Ascending aorta (tissue), 2 donors: ENCODE measurements at regions of chr16 and their contacts with region 1.

Region 1: GRCh38 chr16:30065143-30065850 is at the start of gene ALDOA:
- DNase-seq: peak; percentile 93 to 99
- H3K4me3 ChIP-seq: peak within 1 kb of the TSS; percentile 92
- H3K27ac ChIP-seq: peak within 1 kb of the TSS; percentile 97 to 99
- H3K4me1 ChIP-seq: peaks cover 22 to 51% of the 10 kb centered on the region in 2 donors
- H3K27me3 ChIP-seq: no peaks in the 10 kb centered on the region
- CTCF ChIP-seq: no peak
- total RNA-seq, gene ALDOA: 1,202 TPM

Region 2: GRCh38 chr16:30052671-30053372 is 12.5 kb before region 1 on chr16:
- intact Hi-C with region 1: loop called (anchors 1 kb)
- DNase-seq: peak in 1 of 2 donors; percentile 94
- H3K4me3 ChIP-seq: peak overlapping the region; percentile 79 to 88
- H3K27ac ChIP-seq: peak overlapping the region; percentile 41 to 59
- H3K4me1 ChIP-seq: peaks cover 0 to 12% of the 10 kb centered on the region in 2 donors
- H3K27me3 ChIP-seq: no peaks in the 10 kb centered on the region
- CTCF ChIP-seq: no peak

Region 3: GRCh38 chr16:30091474-30092372 is 26.4 kb after region 1 on chr16 and contains the start of gene TBX6:
- intact Hi-C with region 1: loop called (anchors 1 kb)
- DNase-seq: peak; percentile 65 to 95
- H3K4me3 ChIP-seq: peak within 1 kb of the TSS; percentile 53 to 72
- H3K27ac ChIP-seq: peak within 1 kb of the TSS; percentile 74 to 84
- H3K4me1 ChIP-seq: peaks cover 22 to 27% of the 10 kb centered on the region in 2 donors
- H3K27me3 ChIP-seq: no peaks in the 10 kb centered on the region
- CTCF ChIP-seq: peak; percentile 75 to 96 (median 81)
- total RNA-seq, gene TBX6: 0.75 TPM

Region 4: DNA sequence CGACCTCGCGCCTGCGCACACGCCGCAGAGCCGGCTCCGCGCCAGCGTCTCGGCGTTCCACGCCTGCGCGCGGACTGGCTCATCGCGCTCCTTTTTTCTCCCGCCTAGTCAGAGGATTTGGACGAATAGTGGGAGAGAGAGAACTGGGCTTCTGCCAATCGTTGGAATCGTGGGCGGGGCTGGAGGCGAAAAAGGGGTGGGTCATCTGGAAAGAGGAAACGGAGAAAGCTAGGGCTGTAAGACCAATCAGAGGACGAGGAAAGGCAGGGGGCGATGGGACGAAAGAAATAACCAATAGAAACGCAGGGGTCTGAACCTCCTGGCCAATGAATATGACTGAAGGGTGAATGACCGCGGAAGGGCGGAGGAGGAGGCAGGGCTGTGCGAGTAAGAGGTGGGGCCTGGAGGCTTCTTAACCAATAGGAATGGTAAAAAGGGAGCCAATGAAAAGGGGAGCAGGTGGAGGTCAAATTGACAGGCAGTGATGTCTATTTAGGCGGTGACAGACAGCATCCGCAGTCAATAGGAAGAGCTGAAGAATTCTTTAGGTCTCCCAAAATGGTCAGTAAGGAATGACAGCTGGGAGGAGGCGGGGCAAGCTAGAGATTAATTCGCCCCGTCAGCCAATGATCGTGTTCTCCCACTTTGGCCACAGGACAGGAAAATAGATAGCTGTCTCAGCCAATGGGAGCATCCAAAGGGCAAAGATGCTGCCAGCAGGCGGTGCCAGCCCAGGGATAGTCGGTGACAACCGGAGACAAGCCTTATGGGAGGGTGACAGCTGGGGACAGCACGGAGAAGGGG is 305.3 kb after region 1 on chr16 and contains the start of gene TBC1D10B:
- intact Hi-C with region 1: loop called (anchors 2 kb)
- DNase-seq: peak; percentile 99 to 100
- H3K4me3 ChIP-seq: peak within 1 kb of the TSS; percentile 78 to 82
- H3K27ac ChIP-seq: peak within 1 kb of the TSS; percentile 85 to 88
- H3K4me1 ChIP-seq: peaks cover 13 to 26% of the 10 kb centered on the region in 2 donors
- H3K27me3 ChIP-seq: no peaks in the 10 kb centered on the region
- CTCF ChIP-seq: no peak
- total RNA-seq, gene TBC1D10B: 20.9 TPM

Region 5: GRCh38 chr16:30509081-30509765 is 443.9 kb after region 1 on chr16:
- intact Hi-C with region 1: no loop called
- DNase-seq: no peak
- H3K4me3 ChIP-seq: no peak overlapping the region
- H3K27ac ChIP-seq: no peak overlapping the region
- H3K4me1 ChIP-seq: no peaks in the 10 kb centered on the region
- H3K27me3 ChIP-seq: no peaks in the 10 kb centered on the region
- CTCF ChIP-seq: no peak